SK-N-SH (cell line): ENCODE measurements at regions of chr17 and their contacts with region 1.

Region 1: DNA sequence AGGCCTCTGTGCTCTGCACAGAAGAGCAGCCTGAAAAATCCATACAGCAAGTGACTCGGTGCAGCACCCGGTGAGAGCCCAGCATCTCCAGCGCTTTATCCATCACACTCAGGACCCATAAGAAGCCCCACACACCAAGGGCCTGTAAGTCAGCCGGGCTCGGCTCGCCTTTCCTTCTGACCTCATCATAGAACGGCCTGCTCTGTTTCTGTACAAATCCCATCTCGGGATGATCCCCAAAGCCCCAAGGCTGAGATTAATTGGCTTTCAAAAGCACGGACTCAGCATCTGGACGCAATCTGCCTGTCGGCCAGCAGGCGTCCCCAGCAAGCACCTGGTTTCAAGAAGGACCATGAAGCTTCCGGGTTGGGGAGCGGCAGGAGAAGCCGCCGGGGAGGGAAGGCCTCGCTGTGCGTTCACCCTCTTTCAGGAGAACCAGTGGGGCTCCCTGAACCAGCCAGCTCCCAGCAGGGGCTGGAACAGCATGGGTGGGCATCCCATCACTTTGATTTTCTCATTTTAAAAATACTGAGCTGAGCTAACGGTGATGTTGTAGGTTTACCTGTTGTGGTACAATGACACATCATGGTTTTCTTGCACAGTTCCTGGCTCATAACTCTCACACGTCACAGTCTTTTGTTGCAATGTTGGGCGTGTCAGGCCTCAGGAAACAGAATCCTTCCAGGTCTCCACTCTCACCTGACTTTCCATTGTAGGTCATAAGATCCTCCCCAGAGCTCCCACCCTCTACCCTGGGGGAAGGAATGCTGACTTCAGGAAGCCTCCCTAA is 6.7 kb downstream of the CCDC57 start:
- DNase-seq: peak; percentile 92
- H3K4me3 ChIP-seq: peak overlapping the region in 1 of 2 experiments; percentile 8; a peak in 1 of 4 replicates
- H3K27ac ChIP-seq: peak overlapping the region; percentile 64 to 70
- H3K4me1 ChIP-seq: peaks cover 15 to 19% of the 10 kb centered on the region in 2 experiments; a peak in 3 of 4 replicates
- H3K27me3 ChIP-seq: no peaks in the 10 kb centered on the region
- CTCF ChIP-seq: peak; percentile 97
- EP300 ChIP-seq: no peak
- RAD21 ChIP-seq: peak; percentile 64

Region 2: DNA sequence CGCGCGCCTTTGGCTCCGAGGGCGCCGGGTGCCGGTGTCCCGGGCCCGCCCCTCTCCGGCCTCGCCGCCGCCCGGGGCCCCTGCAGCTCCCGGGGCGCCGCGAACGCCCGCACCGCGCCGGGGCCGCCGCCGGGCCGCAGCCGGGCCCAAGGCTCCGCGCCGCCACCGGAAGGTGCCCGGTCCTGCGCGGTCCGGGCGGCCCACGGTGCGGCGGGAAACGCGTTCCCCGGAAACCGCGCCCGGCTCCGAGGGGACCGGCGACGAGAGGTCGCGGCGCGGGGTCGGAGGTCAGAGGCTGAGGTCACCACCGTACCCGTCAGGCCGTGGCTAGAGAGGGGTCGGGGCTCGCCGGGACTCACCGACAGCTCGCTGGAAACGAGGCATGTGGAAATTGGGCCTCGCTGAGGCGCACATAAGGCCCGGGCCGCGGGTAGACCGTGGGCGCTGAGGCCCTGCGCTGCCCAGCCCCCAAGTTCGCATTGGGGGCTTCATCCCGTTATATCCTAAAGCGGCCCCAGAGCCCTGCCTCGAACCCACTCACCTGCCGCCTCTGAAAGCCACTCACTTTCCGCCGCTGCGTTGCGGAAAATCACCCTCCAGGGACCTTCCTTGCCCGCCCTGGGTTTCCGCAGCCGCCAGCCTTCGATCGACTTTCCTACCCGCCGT is 140.1 kb before region 1 on chr17 and contains the start of gene DUS1L:
- CTCF ChIA-PET with region 1: no interaction called
- POLR2A ChIA-PET with region 1: no interaction called
- DNase-seq: peak; percentile 98
- H3K4me3 ChIP-seq: peak within 1 kb of the TSS; percentile 81 to 95
- H3K27ac ChIP-seq: peak within 1 kb of the TSS in 1 of 2 experiments; percentile 51; a peak in 1 of 4 replicates
- H3K4me1 ChIP-seq: peaks cover 12 to 21% of the 10 kb centered on the region in 2 experiments; a peak in 2 of 4 replicates
- H3K27me3 ChIP-seq: no peaks in the 10 kb centered on the region
- CTCF ChIP-seq: no peak
- EP300 ChIP-seq: no peak
- RAD21 ChIP-seq: no peak
- polyA plus RNA-seq, gene DUS1L: 144 and 163 TPM in 2 replicates

Region 3: GRCh38 chr17:82120148-82120547 is 85.8 kb before region 1 on chr17:
- CTCF ChIA-PET with region 1: no interaction called
- POLR2A ChIA-PET with region 1: no interaction called
- DNase-seq: no peak
- H3K4me3 ChIP-seq: no peak overlapping the region
- H3K27ac ChIP-seq: no peak overlapping the region
- H3K4me1 ChIP-seq: peaks cover 0 to 7% of the 10 kb centered on the region in 2 experiments; a peak in 1 of 4 replicates
- H3K27me3 ChIP-seq: no peaks in the 10 kb centered on the region
- CTCF ChIP-seq: no peak
- EP300 ChIP-seq: no peak
- RAD21 ChIP-seq: no peak

Region 4: GRCh38 chr17:82171750-82172375 is 34.1 kb before region 1 on chr17:
- CTCF ChIA-PET with region 1: interaction called, 11 read pairs
- POLR2A ChIA-PET with region 1: no interaction called
- DNase-seq: no peak
- H3K4me3 ChIP-seq: no peak overlapping the region
- H3K27ac ChIP-seq: no peak overlapping the region
- H3K4me1 ChIP-seq: no peaks in the 10 kb centered on the region
- H3K27me3 ChIP-seq: no peaks in the 10 kb centered on the region
- CTCF ChIP-seq: no peak
- EP300 ChIP-seq: no peak
- RAD21 ChIP-seq: no peak

Region 5: DNA sequence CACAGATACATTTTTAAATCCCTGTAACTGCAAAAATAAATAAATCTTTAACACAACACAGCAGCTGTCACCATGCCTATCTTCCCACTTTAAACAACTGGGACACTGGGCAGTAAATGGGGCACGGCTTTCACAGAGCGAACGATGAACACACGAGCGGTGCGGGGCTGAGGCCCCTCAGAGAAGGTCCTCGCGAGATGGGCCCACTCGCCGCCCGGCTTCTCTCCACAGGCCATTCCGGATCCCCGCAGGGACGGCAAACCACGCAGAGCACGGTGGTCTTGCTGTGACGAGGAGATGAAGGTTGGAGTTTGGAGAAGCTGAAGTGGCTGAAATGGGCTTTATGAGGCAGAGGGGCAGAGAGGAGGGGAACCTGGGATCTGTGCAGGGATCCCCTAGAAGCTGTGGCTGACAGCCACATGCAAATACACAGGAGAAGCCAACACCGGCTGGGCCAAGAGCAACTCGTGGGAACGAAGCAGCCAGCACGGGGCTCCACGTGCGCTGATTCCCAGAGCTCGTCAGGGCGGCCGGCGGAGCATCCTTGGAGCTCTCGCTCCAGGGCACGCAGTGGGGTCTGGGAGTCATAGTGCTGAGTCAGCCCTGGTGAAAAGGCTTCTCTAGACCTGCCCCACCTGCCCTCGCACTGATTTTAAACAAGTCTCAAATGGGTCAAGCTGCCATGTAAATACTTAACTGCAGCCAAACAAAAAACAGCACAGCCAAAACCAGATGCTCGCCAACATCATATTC is 25.0 kb before region 1 on chr17:
- CTCF ChIA-PET with region 1: interaction called, 16 read pairs
- POLR2A ChIA-PET with region 1: no interaction called
- DNase-seq: no peak
- H3K4me3 ChIP-seq: no peak overlapping the region
- H3K27ac ChIP-seq: no peak overlapping the region
- H3K4me1 ChIP-seq: no peaks in the 10 kb centered on the region; a peak in 1 of 4 replicates
- H3K27me3 ChIP-seq: no peaks in the 10 kb centered on the region
- CTCF ChIP-seq: no peak
- EP300 ChIP-seq: no peak
- RAD21 ChIP-seq: no peak

Region 6: GRCh38 chr17:82188001-82188961 is 17.6 kb before region 1 on chr17:
- CTCF ChIA-PET with region 1: interaction called, 37 read pairs
- POLR2A ChIA-PET with region 1: interaction called, 4 read pairs
- DNase-seq: no peak
- H3K4me3 ChIP-seq: no peak overlapping the region
- H3K27ac ChIP-seq: no peak overlapping the region
- H3K4me1 ChIP-seq: no peaks in the 10 kb centered on the region
- H3K27me3 ChIP-seq: no peaks in the 10 kb centered on the region
- CTCF ChIP-seq: no peak
- EP300 ChIP-seq: no peak
- RAD21 ChIP-seq: no peak

Region 7: GRCh38 chr17:82193520-82194220 is 12.2 kb before region 1 on chr17:
- CTCF ChIA-PET with region 1: interaction called, 37 read pairs
- POLR2A ChIA-PET with region 1: interaction called, 3 read pairs
- DNase-seq: peak; percentile 8
- H3K4me3 ChIP-seq: no peak overlapping the region
- H3K27ac ChIP-seq: no peak overlapping the region
- H3K4me1 ChIP-seq: no peaks in the 10 kb centered on the region
- H3K27me3 ChIP-seq: no peaks in the 10 kb centered on the region
- CTCF ChIP-seq: no peak
- EP300 ChIP-seq: no peak
- RAD21 ChIP-seq: no peak

Region 8: DNA sequence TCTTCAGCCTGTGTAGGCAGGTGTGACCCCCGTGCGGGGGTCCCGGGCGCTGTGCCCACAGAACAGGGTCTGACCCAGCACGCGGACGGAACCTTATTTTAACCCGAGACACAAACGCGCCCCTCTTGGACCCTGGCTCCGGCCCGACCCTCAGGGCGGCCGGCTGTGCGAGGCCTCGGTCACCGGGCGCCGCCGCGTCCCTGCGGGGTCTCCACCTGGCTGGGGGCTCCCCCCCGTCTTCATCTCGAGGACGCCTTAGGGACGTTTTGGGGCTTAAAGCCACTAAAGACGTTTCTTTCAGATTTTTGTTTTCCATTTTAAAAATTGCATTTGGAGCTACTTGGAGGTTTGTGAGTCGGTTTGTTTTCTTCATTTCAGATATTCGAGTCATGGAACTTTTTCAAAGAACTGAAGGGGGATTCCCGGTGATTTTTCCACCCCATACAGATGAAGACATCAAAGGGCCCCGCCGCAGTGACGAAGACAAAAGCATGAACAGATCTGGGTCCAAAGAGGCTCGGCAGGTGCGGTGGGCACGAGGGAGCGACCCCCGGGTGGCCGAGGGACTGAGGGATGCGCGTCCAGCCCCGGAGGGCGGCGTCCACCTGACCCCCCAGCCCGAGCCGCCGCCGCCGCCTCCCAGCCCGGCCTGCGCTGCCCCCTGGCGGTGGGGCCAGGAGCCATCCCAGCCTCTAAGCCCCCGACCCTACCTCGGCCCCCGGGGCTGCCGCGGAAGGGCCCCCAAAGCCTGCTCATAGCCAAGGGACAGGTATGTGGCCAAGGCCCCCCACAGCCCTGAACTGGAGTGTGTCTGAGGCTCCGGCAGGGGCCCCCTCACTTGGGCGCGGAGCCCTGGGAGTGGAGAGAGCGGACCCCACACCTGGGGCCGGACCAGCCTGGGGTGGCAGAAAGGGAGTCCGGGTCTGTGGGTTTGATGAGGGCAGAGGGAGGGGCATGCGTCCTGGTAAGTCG is 115.3 kb after region 1 on chr17:
- CTCF ChIA-PET with region 1: interaction called, 21 read pairs
- POLR2A ChIA-PET with region 1: no interaction called
- DNase-seq: peak; percentile 95
- H3K4me3 ChIP-seq: peak overlapping the region; percentile 32 to 52
- H3K27ac ChIP-seq: no peak overlapping the region
- H3K4me1 ChIP-seq: peaks cover 5 to 14% of the 10 kb centered on the region in 2 experiments; a peak in 3 of 4 replicates
- H3K27me3 ChIP-seq: peaks cover 17% of the 10 kb centered on the region; the same call in 1 of the 2 replicates
- CTCF ChIP-seq: peak; percentile 99
- EP300 ChIP-seq: no peak
- RAD21 ChIP-seq: peak; percentile 70

Region 9: GRCh38 chr17:82517230-82517865 is 311.4 kb after region 1 on chr17:
- CTCF ChIA-PET with region 1: no interaction called
- POLR2A ChIA-PET with region 1: no interaction called
- DNase-seq: no peak
- H3K4me3 ChIP-seq: no peak overlapping the region
- H3K27ac ChIP-seq: no peak overlapping the region
- H3K4me1 ChIP-seq: peaks cover 0 to 2% of the 10 kb centered on the region in 2 experiments; a peak in 1 of 4 replicates
- H3K27me3 ChIP-seq: no peaks in the 10 kb centered on the region
- CTCF ChIP-seq: no peak
- EP300 ChIP-seq: no peak
- RAD21 ChIP-seq: no peak